Posterior vena cava (tissue), 2 donors: ENCODE measurements at regions of chr9 and their contacts with region 1.

Region 1: GRCh38 chr9:4762108-4762885 is 21.3 kb upstream of the AK3 start:
- DNase-seq: no peak

Region 2: GRCh38 chr9:4984621-4985385 is 222.5 kb after region 1 on chr9 and contains the start of gene JAK2:
- intact Hi-C with region 1: loop called (anchors 5 kb)
- DNase-seq: peak; percentile 98
- total RNA-seq, gene JAK2: 65.8 to 67.2 TPM

Region 3: GRCh38 chr9:5262481-5262880 is 500.2 kb after region 1 on chr9:
- intact Hi-C with region 1: no loop called
- DNase-seq: no peak

Region 4: GRCh38 chr9:5437254-5438216 is 675.2 kb after region 1 on chr9 and contains the start of gene PLGRKT:
- intact Hi-C with region 1: loop called (anchors 10 kb)
- DNase-seq: peak; percentile 98
- total RNA-seq, gene PLGRKT: 19.8 to 27.6 TPM